Caco-2 (cell line): ENCODE measurements at regions of chr2 and their contacts with region 1.

Region 1: DNA sequence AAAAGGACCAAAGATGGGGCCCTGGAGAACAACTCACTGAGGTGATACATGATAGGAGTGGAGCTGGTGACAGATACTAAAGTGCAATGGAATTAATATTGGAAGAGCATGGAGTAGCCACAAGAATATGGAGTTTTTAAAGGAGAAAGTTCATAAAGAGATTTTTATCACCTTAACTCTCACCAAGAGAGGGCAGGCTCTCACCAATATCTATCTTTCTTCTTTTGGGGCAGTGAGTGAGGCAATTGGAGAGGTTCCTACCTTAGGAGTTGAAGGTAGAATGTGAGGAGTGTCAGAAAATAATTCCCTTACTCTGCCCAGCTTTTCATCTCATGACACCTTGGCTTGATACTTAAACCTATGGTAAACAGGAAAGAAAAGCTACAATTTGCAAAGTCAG is 233.7 kb upstream of the CWC22 start:
- DNase-seq: peak in 1 of 2 experiments; percentile 15
- H3K4me3 ChIP-seq: no peak overlapping the region
- H3K4me3 Mint-ChIP-seq: no peak overlapping the region
- H3K27ac Mint-ChIP-seq: no peak overlapping the region
- H3K4me1 ChIP-seq: no peaks in the 10 kb centered on the region
- H3K4me1 Mint-ChIP-seq: no peaks in the 10 kb centered on the region
- H3K27me3 ChIP-seq: no peaks in the 10 kb centered on the region
- H3K27me3 Mint-ChIP-seq: no peaks in the 10 kb centered on the region
- CTCF ChIP-seq: peak; percentile 33 to 36

Region 2: DNA sequence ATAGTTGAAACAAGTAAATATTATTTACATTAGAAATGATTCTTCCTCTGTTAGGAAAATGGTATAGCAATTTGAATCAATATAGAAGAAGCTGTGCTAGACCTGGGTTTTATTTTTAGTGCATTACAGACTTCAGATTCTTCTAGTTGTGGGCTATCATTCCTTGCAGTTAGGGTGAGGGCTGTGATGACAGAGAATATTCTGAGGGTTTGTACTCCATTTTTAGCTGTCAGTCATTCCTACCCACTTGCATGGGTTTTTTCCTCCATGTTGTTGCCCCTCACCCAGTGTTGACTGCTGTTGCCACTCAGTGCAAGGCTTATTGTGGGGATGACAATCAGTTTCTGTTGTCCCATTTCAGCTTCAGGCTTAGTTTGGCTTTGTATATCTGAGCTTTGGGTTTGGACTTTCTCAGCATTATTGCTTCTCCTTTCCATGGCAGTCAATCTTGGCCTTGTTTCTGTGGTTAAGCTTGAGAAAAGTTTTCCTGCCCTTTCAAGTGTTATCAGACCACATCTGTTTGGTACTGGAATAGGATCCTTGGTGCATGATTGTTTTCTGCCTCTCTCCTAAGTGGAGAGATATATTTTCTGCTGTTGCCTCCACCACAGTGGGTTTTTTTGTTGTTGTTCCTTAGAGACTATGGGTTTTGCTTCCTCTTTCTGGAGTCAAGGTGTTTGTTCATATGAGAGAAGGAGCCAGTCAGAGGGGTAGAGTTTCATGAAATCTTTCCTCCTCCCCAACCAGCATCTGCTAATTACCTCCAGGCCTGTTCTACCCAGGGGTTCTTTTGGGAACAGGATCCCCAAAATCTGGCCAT is 79.0 kb after region 1 on chr2:
- CTCF ChIA-PET with region 1: no interaction called
- POLR2A ChIA-PET with region 1: no interaction called
- intact Hi-C with region 1: loop called (anchors 5 kb)
- DNase-seq: no peak
- H3K4me3 ChIP-seq: no peak overlapping the region
- H3K4me3 Mint-ChIP-seq: no peak overlapping the region
- H3K27ac Mint-ChIP-seq: no peak overlapping the region
- H3K4me1 ChIP-seq: no peaks in the 10 kb centered on the region
- H3K4me1 Mint-ChIP-seq: no peaks in the 10 kb centered on the region
- H3K27me3 ChIP-seq: no peaks in the 10 kb centered on the region
- H3K27me3 Mint-ChIP-seq: no peaks in the 10 kb centered on the region
- CTCF ChIP-seq: no peak

Region 3: GRCh38 chr2:180481998-180482397 is 241.2 kb after region 1 on chr2:
- CTCF ChIA-PET with region 1: no interaction called
- POLR2A ChIA-PET with region 1: no interaction called
- intact Hi-C with region 1: loop called (anchors 5 kb)
- DNase-seq: no peak
- H3K4me3 ChIP-seq: no peak overlapping the region
- H3K4me3 Mint-ChIP-seq: no peak overlapping the region
- H3K27ac Mint-ChIP-seq: no peak overlapping the region
- H3K4me1 ChIP-seq: no peaks in the 10 kb centered on the region
- H3K4me1 Mint-ChIP-seq: no peaks in the 10 kb centered on the region
- H3K27me3 ChIP-seq: no peaks in the 10 kb centered on the region
- H3K27me3 Mint-ChIP-seq: peaks cover 2% of the 10 kb centered on the region
- CTCF ChIP-seq: no peak

Region 4: GRCh38 chr2:181058378-181059269 is 817.9 kb after region 1 on chr2:
- CTCF ChIA-PET with region 1: no interaction called
- POLR2A ChIA-PET with region 1: no interaction called
- intact Hi-C with region 1: loop called (anchors 2 kb)
- DNase-seq: peak in 1 of 2 experiments; percentile 28
- H3K4me3 ChIP-seq: no peak overlapping the region
- H3K4me3 Mint-ChIP-seq: no peak overlapping the region
- H3K27ac Mint-ChIP-seq: no peak overlapping the region
- H3K4me1 ChIP-seq: no peaks in the 10 kb centered on the region
- H3K4me1 Mint-ChIP-seq: no peaks in the 10 kb centered on the region
- H3K27me3 ChIP-seq: no peaks in the 10 kb centered on the region
- H3K27me3 Mint-ChIP-seq: peaks cover 2% of the 10 kb centered on the region
- CTCF ChIP-seq: peak; percentile 57 to 73